ENCODE measurements at regions of chr4 and their contacts with region 1.

Region 1: GRCh38 chr4:153750197-153750817 is 9.5 kb downstream of the RNF175 start:
- DNase-seq: peak; percentile 14
- H3K4me3 ChIP-seq: no peak overlapping the region
- CTCF ChIP-seq: peak; percentile 68

Region 2: DNA sequence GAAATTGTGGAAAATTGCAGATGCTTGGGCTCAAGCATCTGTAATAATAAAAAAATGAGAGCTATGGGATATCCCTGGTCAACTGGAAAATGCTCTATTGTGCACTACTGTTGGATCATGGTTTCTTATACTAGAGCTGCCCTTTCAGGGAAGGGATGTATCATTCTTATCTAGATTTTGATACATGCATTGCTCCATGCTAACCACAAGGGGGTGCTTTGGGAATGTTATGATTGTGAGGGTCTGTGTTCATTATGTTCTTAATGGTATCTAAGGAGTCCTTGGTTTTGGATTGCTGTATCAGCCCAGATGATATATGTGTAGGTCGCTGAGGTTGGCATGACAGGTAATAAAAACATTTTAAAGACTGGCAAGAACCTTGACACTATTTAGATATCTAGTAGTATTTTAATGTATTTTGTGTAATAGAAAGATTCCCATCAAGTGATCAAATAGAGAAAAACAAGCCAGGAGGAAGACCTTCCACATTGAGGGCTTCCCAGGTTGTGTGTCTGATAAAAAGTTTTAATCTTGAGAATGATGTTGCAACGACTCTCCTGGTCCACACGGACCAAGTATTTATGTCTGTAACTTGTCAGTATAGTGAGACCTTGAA is 115.5 kb before region 1 on chr4:
- CTCF ChIA-PET with region 1: interaction called, 16 read pairs
- POLR2A ChIA-PET with region 1: no interaction called
- DNase-seq: no peak
- H3K4me3 ChIP-seq: no peak overlapping the region
- CTCF ChIP-seq: peak; percentile 40

Region 3: GRCh38 chr4:153763404-153763803 is 13.1 kb after region 1 on chr4:
- CTCF ChIA-PET with region 1: interaction called, 10 read pairs
- POLR2A ChIA-PET with region 1: no interaction called
- DNase-seq: no peak
- H3K4me3 ChIP-seq: no peak overlapping the region
- CTCF ChIP-seq: no peak

Region 4: DNA sequence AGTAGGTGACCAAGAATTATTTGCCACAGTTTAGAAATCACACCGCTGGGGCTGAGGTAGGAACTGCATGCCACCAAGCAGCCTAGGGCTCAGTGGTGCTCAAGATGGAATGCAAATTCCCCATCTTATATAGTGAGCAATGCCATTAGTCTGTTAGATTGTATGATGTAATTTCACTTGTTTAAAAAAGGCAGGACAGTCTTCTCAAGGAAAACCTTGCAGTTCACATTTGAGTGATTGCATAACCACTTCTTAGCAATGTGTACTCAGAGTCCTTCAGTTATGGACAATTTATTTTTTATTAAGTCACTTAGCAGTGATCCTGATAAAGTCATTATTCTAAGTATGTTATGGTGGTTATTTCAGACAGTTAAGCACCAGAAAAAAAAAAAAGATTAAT is 181.5 kb after region 1 on chr4:
- CTCF ChIA-PET with region 1: no interaction called
- POLR2A ChIA-PET with region 1: no interaction called
- DNase-seq: no peak
- H3K4me3 ChIP-seq: no peak overlapping the region
- CTCF ChIP-seq: no peak

Region 5: DNA sequence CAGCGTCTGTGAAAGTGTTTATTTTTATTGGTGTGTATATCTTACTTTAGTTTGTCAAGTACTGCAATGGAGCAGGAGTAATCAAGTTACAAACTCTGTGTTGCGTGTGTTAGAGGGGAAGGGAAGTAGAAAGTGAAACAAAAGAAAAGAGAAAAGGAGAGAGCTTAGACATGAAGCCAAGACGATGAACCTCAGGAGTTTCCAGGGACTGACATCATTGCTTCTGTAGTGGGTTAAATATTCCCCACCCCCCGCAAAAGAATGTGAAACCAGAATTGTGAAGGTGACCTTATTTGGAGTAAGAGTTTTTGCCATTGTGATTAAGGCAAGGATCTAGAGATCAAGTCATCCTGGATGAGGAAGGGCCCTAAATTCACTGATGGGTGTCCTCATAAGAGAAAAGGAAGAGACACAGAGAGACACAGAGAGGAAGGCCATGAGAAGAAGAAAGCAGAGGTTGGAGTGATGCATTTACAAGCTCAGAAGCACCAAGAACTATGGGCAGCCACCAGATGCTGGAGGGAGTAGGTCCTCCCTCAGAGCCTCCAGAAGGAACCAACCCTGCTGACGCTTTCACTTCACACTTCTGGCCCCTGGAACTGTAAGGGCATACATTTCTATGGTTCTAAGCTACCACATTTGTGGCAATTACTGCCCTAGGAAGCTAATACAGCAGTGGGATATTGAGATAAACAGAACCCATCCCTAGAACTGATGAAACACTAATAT is 212.2 kb after region 1 on chr4:
- CTCF ChIA-PET with region 1: no interaction called
- POLR2A ChIA-PET with region 1: no interaction called
- DNase-seq: no peak
- H3K4me3 ChIP-seq: no peak overlapping the region
- CTCF ChIP-seq: no peak

Measured in AG04449 (cell line).